Sciatic nerve (tissue), 2 donors: ENCODE measurements at regions of chr16 and their contacts with region 1.

Region 1: GRCh38 chr16:1929578-1930337 is 11.5 kb upstream of the HS3ST6 start:
- DNase-seq: peak; percentile 94
- ATAC-seq: peak; percentile 91

Region 2: GRCh38 chr16:1863681-1864460 is 65.9 kb before region 1 on chr16:
- intact Hi-C with region 1: loop called (anchors 5 kb)
- DNase-seq: no peak
- ATAC-seq: no peak

Region 3: GRCh38 chr16:1971796-1972489 is 42.2 kb after region 1 on chr16 and contains the start of gene TBL3:
- intact Hi-C with region 1: no loop called
- DNase-seq: peak; percentile 95
- ATAC-seq: peak; percentile 95
- total RNA-seq, gene TBL3: 21.8 TPM